ENCODE measurements at regions of chr7 and their contacts with region 1.

Region 1: DNA sequence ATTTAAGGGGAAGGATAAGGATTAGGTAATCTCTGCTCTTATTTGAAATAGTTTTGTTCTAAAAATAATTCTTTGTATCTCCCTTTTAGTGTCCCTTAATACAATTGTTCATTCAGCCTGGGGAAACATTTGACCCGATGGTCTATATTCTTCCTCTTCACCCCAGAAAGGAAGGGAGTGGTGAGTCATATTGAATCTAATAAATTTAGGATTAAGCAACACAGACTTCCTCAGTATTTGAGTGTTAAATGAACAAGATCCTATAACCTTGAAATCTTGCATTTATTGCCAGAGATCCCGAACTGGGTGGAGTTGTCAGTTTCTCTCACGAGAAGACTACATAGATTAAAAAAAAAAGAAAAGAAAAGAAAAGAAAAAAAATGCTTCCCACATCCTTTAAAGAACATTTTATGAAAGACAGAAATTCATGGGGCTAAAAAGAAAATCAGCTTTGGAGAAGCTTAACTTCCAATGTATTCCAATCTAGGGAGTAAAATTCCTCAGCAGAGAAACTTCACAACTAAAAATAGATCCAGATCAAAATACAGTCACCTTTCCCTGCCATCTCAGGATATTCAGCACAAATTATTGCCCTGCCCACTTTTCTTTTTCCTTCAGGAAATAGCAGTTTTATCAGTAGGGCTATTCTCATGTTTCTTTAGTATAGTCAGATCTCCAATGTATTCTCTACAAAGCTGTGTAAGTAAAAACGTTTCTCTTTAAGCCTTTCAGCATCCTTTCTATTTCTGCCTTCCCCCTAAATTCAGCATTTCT is 82.2 kb downstream of the SEMA3D start:
- DNase-seq: peak in 1 of 5 donors; percentile 22
- H3K4me3 ChIP-seq: no peak overlapping the region
- H3K27ac ChIP-seq: no peak overlapping the region
- H3K4me1 ChIP-seq: peaks cover 2% of the 10 kb centered on the region
- H3K27me3 ChIP-seq: no peaks in the 10 kb centered on the region
- CTCF ChIP-seq: no peak
- EP300 ChIP-seq: no peak
- POLR2A ChIP-seq: no peak

Region 2: DNA sequence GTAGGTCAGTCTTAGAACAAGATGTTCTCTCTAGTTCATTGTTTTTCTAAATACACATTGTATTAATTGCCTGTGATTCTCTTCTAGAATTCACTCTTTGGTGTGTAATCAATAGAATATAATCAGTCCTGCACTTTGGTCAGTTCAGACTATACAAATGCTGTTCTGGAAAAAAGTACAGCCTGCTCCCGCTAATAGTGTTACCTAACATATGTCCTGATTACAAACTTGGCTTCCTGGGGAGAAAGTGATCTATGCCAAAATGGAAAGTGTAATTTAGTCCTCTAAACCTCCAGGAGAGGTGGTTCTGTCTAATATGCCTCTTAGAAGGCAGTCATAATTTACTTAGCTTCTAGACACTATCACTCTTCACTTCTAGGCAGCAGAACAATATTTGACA is 133.3 kb before region 1 on chr7:
- intact Hi-C with region 1: no loop called
- DNase-seq: no peak
- H3K4me3 ChIP-seq: no peak overlapping the region
- H3K27ac ChIP-seq: no peak overlapping the region
- H3K4me1 ChIP-seq: no peaks in the 10 kb centered on the region
- H3K27me3 ChIP-seq: no peaks in the 10 kb centered on the region
- CTCF ChIP-seq: no peak
- EP300 ChIP-seq: no peak
- POLR2A ChIP-seq: no peak

Region 3: GRCh38 chr7:85070967-85071628 is 33.5 kb before region 1 on chr7:
- intact Hi-C with region 1: loop called in 1 of 4 experiments (anchors 1 kb)
- DNase-seq: no peak
- H3K4me3 ChIP-seq: no peak overlapping the region
- H3K27ac ChIP-seq: no peak overlapping the region
- H3K4me1 ChIP-seq: no peaks in the 10 kb centered on the region
- H3K27me3 ChIP-seq: no peaks in the 10 kb centered on the region
- CTCF ChIP-seq: no peak
- EP300 ChIP-seq: no peak
- POLR2A ChIP-seq: no peak

Region 4: DNA sequence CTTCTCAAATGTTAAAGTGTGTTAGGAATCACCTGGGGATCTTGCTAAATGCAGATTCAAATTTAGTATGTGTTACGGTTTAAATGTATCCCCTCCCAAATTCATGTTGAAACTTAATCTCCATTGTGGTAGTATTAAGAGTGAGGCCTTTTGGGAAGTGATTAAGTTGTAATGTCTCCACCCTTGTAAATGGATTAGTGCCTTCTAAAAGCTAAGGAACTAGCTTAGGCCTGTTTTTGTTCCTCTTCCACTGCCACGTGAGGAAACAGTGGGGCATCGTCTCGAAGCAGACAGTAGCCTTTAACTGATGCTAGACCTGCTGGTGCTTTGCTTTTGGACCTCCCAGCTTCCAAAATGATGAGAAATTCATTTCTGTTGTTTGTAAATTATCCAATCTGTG is 134.5 kb after region 1 on chr7:
- intact Hi-C with region 1: no loop called
- DNase-seq: no peak
- H3K4me3 ChIP-seq: no peak overlapping the region
- H3K27ac ChIP-seq: no peak overlapping the region
- H3K4me1 ChIP-seq: no peaks in the 10 kb centered on the region
- H3K27me3 ChIP-seq: no peaks in the 10 kb centered on the region
- CTCF ChIP-seq: no peak
- EP300 ChIP-seq: no peak
- POLR2A ChIP-seq: no peak

Measured in ovary (tissue), 10 donors.